PC-3 (cell line): ENCODE measurements at regions of chr5 and their contacts with region 1.

Region 1: GRCh38 chr5:142644640-142645361 is 41.1 kb downstream of the FGF1 start:
- DNase-seq: peak; percentile 97
- ATAC-seq: peak; percentile 93
- H3K4me3 ChIP-seq: peak overlapping the region; percentile 29
- H3K27ac ChIP-seq: peak overlapping the region; percentile 100
- H3K4me1 ChIP-seq: peaks cover 28% of the 10 kb centered on the region
- H3K27me3 ChIP-seq: no peaks in the 10 kb centered on the region
- CTCF ChIP-seq: no peak

Region 2: DNA sequence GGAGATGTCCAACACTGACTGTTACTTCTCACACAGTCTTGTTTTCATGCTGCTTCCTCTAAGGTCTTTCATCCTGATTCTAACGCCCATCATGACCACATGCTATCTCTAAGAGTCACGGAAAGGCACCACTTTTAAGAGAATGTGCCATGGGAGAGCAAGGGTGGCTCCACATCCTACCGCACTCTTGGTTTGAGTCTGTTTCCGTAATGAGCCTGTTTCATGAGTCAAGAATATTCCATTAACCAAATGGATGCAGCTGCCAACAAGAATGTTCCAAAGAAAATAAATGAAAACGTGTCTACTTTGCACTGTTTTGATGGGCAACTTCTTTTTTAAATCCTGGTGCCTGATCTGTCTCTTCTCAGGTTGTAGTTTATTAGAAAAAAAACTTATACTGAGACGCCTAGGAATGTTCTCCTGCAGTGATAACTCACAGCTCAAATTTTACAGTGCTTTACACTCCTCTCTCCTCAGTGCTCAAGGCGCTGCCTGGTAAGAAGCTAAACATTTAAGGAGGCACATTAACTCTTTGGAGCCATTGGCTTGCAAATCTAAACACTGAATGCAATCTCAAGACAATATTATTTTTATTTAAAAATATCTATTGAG is 83.2 kb before region 1 on chr5:
- CTCF ChIA-PET with region 1: no interaction called
- POLR2A ChIA-PET with region 1: no interaction called
- intact Hi-C with region 1: no loop called
- DNase-seq: no peak
- ATAC-seq: no peak
- H3K4me3 ChIP-seq: no peak overlapping the region
- H3K27ac ChIP-seq: no peak overlapping the region
- H3K4me1 ChIP-seq: no peaks in the 10 kb centered on the region
- H3K27me3 ChIP-seq: no peaks in the 10 kb centered on the region
- CTCF ChIP-seq: no peak

Region 3: DNA sequence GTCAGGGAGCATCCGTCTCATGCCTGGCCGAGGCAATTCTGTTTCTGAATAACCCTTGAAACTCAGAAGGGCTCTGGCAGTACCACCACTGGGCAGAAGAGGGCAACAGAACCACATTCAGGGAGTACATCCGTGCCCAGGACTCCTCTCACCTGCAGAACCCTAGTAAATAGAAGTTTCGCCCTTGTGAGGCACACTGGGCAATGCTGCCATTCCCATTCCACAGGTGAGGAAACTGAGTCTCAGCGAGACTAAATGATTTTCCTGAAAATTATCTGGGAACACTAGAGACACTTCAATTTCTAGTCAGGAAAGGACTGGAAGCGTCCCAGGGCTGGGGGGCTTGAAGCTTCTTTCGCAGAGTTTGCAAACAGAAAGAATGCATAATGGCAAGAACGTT is 33.6 kb before region 1 on chr5:
- CTCF ChIA-PET with region 1: no interaction called
- POLR2A ChIA-PET with region 1: no interaction called
- intact Hi-C with region 1: loop called (anchors 2 kb)
- DNase-seq: peak; percentile 68
- ATAC-seq: peak; percentile 93
- H3K4me3 ChIP-seq: no peak overlapping the region
- H3K27ac ChIP-seq: no peak overlapping the region
- H3K4me1 ChIP-seq: peaks cover 8% of the 10 kb centered on the region; the same call in 1 of the 2 replicates
- H3K27me3 ChIP-seq: no peaks in the 10 kb centered on the region
- CTCF ChIP-seq: peak; percentile 68

Region 4: GRCh38 chr5:142618130-142618523 is 26.7 kb before region 1 on chr5:
- CTCF ChIA-PET with region 1: no interaction called
- POLR2A ChIA-PET with region 1: interaction called, 4 read pairs
- intact Hi-C with region 1: loop called (anchors 2 kb)
- DNase-seq: peak; percentile 67
- ATAC-seq: peak; percentile 69
- H3K4me3 ChIP-seq: no peak overlapping the region
- H3K27ac ChIP-seq: peak overlapping the region; percentile 61
- H3K4me1 ChIP-seq: peaks cover 38% of the 10 kb centered on the region
- H3K27me3 ChIP-seq: no peaks in the 10 kb centered on the region
- CTCF ChIP-seq: no peak